ENCODE measurements at regions of chr19 and their contacts with region 1.

Region 1: GRCh38 chr19:21202865-21203494 is 61.1 kb downstream of the ZNF431 start:
- DNase-seq: no peak
- H3K4me3 Mint-ChIP-seq: no peak overlapping the region
- H3K27ac Mint-ChIP-seq: no peak overlapping the region
- H3K4me1 Mint-ChIP-seq: no peaks in the 10 kb centered on the region
- H3K27me3 Mint-ChIP-seq: no peaks in the 10 kb centered on the region

Region 2: GRCh38 chr19:21328885-21329605 is 126.1 kb after region 1 on chr19 and contains the start of gene ZNF708:
- intact Hi-C with region 1: no loop called
- DNase-seq: peak; percentile 78
- H3K4me3 Mint-ChIP-seq: peak within 1 kb of the TSS; percentile 96
- H3K27ac Mint-ChIP-seq: peak within 1 kb of the TSS; percentile 98
- H3K4me1 Mint-ChIP-seq: peaks cover 13% of the 10 kb centered on the region
- H3K27me3 Mint-ChIP-seq: no peaks in the 10 kb centered on the region
- total RNA-seq, gene ZNF708: 9.6 and 9.9 TPM in 2 replicates

Region 3: DNA sequence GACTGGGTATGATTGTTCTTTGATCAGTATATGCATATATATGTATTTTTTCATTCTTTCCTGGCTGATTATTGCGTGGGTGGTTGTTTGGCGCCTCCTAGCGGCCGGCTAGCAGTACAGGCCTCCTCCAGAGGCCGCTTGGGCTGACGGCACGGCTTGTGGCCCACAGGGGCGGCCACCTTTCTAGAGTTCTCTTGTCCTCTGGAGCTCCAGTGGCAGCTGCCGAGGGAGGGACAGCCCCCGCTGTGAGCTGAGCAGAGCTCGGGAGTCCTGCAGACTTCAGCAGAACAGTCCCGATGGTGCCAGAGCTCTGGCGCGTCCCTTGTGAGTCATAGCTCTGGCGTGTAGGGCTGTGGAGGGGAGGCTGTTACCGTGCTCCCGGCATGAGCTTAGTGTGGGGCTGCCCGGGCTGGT is 279.9 kb after region 1 on chr19:
- intact Hi-C with region 1: loop called (anchors 5 kb)
- DNase-seq: peak; percentile 23
- H3K4me3 Mint-ChIP-seq: no peak overlapping the region
- H3K27ac Mint-ChIP-seq: no peak overlapping the region
- H3K4me1 Mint-ChIP-seq: no peaks in the 10 kb centered on the region
- H3K27me3 Mint-ChIP-seq: no peaks in the 10 kb centered on the region

Region 4: GRCh38 chr19:21698215-21698614 is 495.2 kb after region 1 on chr19:
- intact Hi-C with region 1: loop called (anchors 2 kb)
- DNase-seq: no peak
- H3K4me3 Mint-ChIP-seq: no peak overlapping the region
- H3K27ac Mint-ChIP-seq: no peak overlapping the region
- H3K4me1 Mint-ChIP-seq: no peaks in the 10 kb centered on the region
- H3K27me3 Mint-ChIP-seq: no peaks in the 10 kb centered on the region

Measured in activated T-helper 1 cell treated with anti-CD3 and anti-CD28 coated beads, Interleukin-12 subunit alpha, Interleukin-12 subunit beta, Interleukin-2, Interleukin-4 antibody, amounts not matched to agents 30 ng/mL and 10 ng/mL and 1 ng/mL, durations not matched to agents 14 hours and 24 hours and 36 hours (primary cell).